ENCODE measurements at regions of chr10 and their contacts with region 1.

Region 1: DNA sequence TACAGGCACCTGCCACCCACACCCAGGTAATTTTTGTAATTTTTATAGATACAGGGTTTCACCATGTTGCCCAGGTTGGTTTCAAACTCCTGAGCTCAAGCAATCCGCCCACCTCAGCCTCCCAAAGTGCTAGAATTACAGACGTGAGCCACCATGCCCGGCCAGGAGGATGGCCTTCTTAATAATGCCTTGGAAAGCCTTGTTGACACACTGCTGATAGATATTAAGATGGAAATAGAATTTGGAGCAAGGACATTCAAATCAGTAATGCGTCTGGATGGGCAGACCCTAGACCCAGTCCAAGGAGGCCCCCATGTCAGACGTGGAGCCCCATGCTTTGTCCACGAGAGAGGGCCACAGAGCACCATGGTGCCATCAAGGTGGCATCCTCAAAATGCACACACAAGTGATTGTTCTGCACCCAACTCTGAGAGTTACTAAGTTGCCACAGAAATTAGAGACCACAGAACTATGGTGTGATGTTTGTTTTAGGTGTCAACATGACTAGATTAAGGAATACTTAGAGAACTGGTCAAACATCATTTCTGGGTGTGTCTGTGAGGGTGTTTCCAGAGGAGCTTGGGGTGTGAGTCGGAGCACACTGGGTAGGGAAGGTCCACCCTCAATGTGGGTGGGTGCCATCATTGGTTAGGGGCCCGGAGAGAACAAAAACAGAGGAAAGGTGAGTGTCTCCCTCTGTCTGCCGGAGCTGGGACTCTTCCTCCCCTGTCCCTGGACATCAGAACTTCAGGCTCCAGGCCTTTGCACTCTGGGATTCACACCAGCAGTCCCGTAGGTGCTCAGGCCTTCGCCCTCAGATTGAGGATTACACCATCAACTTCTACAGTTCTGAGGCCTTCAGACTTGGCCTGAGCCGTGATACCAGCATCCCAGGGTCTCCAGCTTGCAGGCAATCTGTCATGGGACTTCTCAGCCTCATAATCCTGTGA is 34.5 kb downstream of the EBF3 start:
- DNase-seq: no peak

Region 2: GRCh38 chr10:129883626-129884396 is 45.8 kb before region 1 on chr10:
- in situ Hi-C with region 1: loop called (anchors 5 kb)
- DNase-seq: no peak

Measured in G401 (cell line).